ENCODE measurements at regions of chr1 and their contacts with region 1.

Region 1: GRCh38 chr1:162145280-162145965 is 75.9 kb downstream of the NOS1AP start:
- DNase-seq: no peak
- H3K4me3 ChIP-seq: peak overlapping the region in 3 of 4 experiments; percentile 37 to 41 (median 38); a peak in 5 of 8 replicates
- H3K27ac ChIP-seq: peak overlapping the region; percentile 46
- H3K4me1 ChIP-seq: peaks cover 14 to 34% (median 32%) of the 10 kb centered on the region in 4 experiments
- H3K27me3 ChIP-seq: no peaks in the 10 kb centered on the region; a peak in 1 of 7 replicates
- CTCF ChIP-seq: no peak
- EP300 ChIP-seq: peak in 1 of 2 experiments; percentile 29; a peak in 1 of 3 replicates
- POLR2A ChIP-seq: no peak
- RAD21 ChIP-seq: no peak

Region 2: GRCh38 chr1:162040681-162041080 is 104.7 kb before region 1 on chr1:
- CTCF ChIA-PET with region 1: no interaction called
- POLR2A ChIA-PET with region 1: no interaction called
- DNase-seq: no peak
- H3K4me3 ChIP-seq: no peak overlapping the region
- H3K27ac ChIP-seq: no peak overlapping the region
- H3K4me1 ChIP-seq: no peaks in the 10 kb centered on the region; a peak in 1 of 7 replicates
- H3K27me3 ChIP-seq: no peaks in the 10 kb centered on the region
- CTCF ChIP-seq: peak in 2 of 3 experiments; percentile 55 to 74; a peak in 3 of 4 replicates
- EP300 ChIP-seq: no peak
- POLR2A ChIP-seq: no peak
- RAD21 ChIP-seq: peak; percentile 44 to 45; a peak in 3 of 4 replicates

Region 3: DNA sequence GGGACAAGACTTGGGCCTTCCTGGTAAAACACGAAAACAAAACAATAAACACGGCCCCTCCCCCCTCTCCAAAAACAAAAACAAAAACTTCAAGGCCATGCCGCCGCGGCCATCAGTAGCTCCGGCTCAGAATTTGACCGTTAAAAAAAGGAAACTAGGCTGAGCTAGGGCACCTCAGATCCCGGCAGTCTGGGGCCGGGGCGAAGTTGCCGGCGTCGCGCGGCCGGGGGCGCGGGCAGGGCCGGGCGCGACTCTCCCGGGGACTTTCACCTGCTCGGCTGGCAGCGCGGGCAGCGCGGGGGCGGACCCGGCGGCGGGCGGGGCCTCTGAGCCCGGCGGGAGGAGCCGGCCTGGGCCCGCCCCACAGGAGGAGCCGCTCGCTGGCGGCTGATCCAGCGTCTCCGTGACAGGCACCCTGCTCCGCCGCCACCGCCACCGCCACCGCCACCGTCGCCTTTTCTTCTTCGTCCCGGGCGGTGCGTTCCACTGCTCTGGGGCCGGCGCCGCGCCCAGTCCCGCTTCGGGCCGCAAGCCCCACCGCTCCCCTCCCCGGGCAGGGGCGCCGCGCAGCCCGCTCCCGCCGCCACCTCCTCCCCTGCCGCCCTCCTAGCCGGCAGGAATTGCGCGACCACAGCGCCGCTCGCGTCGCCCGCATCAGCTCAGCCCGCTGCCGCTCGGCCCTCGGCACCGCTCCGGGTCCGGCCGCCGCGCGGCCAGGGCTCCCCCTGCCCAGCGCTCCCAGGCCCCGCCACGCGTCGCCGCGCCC is 75.9 kb before region 1 on chr1 and contains the start of gene NOS1AP:
- CTCF ChIA-PET with region 1: interaction called, 4 read pairs
- POLR2A ChIA-PET with region 1: interaction called, 24 read pairs
- DNase-seq: peak in 1 of 2 experiments; percentile 89
- H3K4me3 ChIP-seq: peak within 1 kb of the TSS; percentile 72 to 79 (median 76)
- H3K27ac ChIP-seq: no peak within 1 kb of the TSS
- H3K4me1 ChIP-seq: peaks cover 6 to 32% (median 16%) of the 10 kb centered on the region in 4 experiments; a peak in 6 of 7 replicates
- H3K27me3 ChIP-seq: no peaks in the 10 kb centered on the region
- CTCF ChIP-seq: no peak
- EP300 ChIP-seq: no peak
- POLR2A ChIP-seq: no peak; a peak in 1 of 3 replicates
- RAD21 ChIP-seq: no peak; a peak in 1 of 4 replicates
- total RNA-seq, gene NOS1AP: 11.4 and 12.1 TPM in 2 replicates

Region 4: GRCh38 chr1:162091681-162092524 is 53.5 kb before region 1 on chr1:
- CTCF ChIA-PET with region 1: interaction called, 3 read pairs
- POLR2A ChIA-PET with region 1: interaction called, 10 read pairs
- DNase-seq: peak; percentile 56 to 70
- H3K4me3 ChIP-seq: peak overlapping the region in 3 of 4 experiments; percentile 17 to 41 (median 26); a peak in 4 of 8 replicates
- H3K27ac ChIP-seq: no peak overlapping the region
- H3K4me1 ChIP-seq: peaks cover 4 to 17% (median 11%) of the 10 kb centered on the region in 4 experiments; a peak in 6 of 7 replicates
- H3K27me3 ChIP-seq: peaks cover 0 to 5% (median 2%) of the 10 kb centered on the region in 4 experiments; a peak in 4 of 7 replicates
- CTCF ChIP-seq: no peak; a peak in 1 of 4 replicates
- EP300 ChIP-seq: peak in 1 of 2 experiments; percentile 81; a peak in 2 of 3 replicates
- POLR2A ChIP-seq: no peak
- RAD21 ChIP-seq: peak; percentile 19; a peak in 2 of 4 replicates

Region 5: DNA sequence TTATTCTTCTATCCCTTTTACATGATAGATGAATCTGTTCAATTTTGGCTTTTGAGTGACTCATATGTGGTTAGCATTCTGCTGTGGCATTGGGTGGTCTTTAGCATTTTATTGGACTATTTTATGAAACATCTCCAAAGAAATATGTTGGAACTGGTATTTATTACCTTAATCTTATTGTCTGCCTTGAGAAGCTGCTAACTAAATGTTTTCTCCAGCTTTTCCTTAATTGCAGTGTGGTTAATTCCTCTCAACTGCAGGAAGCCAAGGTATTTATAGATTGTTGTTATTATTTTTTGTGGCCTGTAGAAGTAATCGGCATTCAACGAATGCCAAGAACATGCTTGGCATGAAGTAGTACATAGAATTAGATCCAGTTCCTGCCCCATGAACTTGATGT is 11.9 kb before region 1 on chr1:
- CTCF ChIA-PET with region 1: interaction called, 12 read pairs
- POLR2A ChIA-PET with region 1: interaction called, 8 read pairs
- DNase-seq: no peak
- H3K4me3 ChIP-seq: no peak overlapping the region
- H3K27ac ChIP-seq: no peak overlapping the region
- H3K4me1 ChIP-seq: peaks cover 4 to 18% (median 6%) of the 10 kb centered on the region in 4 experiments
- H3K27me3 ChIP-seq: no peaks in the 10 kb centered on the region
- CTCF ChIP-seq: no peak
- EP300 ChIP-seq: no peak
- POLR2A ChIP-seq: no peak
- RAD21 ChIP-seq: no peak

Region 6: DNA sequence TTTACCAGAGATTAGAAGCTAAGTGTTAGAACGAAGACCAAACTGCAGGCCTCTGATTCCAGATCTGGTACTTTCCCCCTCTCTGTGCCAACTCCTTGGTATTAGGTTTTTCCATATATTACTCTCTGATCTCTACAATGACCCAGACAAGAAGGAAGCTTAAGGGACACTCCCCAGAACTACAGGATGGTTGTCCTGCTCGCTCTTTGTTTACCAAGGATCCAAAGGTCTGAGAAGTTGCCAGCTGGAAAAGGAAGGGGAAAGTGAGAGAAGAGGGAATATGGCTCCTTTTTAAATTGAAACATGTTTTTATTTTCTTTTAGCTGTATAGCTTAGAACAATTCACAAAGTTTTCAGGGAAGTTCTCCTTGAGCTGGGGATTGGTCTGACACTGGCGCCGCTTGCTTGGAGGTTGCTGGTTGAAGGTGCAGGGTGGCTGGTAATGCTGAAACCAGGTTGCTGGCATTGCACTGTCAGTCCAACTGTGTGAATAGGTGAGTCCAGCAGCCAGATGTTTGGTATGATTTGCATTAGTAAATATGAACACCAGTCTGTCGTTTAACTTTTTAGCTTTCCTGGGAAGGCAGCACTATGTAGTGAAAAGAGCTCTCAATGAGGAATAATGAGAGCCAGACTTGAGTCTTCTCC is 13.3 kb after region 1 on chr1:
- CTCF ChIA-PET with region 1: interaction called, 36 read pairs
- POLR2A ChIA-PET with region 1: interaction called, 8 read pairs
- DNase-seq: no peak
- H3K4me3 ChIP-seq: no peak overlapping the region
- H3K27ac ChIP-seq: no peak overlapping the region
- H3K4me1 ChIP-seq: no peaks in the 10 kb centered on the region; a peak in 1 of 7 replicates
- H3K27me3 ChIP-seq: no peaks in the 10 kb centered on the region
- CTCF ChIP-seq: no peak
- EP300 ChIP-seq: no peak
- POLR2A ChIP-seq: no peak
- RAD21 ChIP-seq: no peak

Region 7: DNA sequence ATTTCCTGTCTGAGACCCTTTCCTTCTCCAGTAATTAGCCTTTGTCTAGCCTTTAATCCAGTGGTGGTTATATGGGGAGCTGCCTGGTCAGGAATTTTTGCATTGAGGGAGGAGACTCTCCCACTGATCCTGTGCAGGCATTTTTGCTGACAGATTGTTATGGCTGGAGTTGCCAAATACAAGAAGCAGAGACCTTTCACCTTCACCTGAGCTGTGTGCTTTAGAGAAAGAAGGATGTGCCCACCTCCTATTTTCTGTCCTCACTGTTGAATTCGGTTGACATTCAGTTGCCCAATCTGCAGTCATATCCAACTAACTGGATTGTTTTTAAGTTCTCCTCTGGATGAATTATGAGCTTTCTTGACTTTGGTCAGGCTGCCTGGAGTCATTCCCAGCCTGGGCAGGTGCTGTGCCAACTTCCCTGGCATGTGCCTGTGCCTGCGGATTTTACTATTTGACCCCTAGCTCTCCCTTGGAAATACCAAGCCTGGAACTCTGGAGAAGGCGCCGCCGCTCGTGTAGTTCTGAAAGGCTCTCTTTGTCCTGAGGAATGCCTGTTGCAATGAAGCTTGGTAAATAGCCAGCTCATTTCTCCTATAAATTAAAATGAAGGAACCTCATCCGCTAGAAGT is 68.0 kb after region 1 on chr1:
- CTCF ChIA-PET with region 1: no interaction called
- POLR2A ChIA-PET with region 1: interaction called, 11 read pairs
- DNase-seq: no peak
- H3K4me3 ChIP-seq: no peak overlapping the region
- H3K27ac ChIP-seq: no peak overlapping the region
- H3K4me1 ChIP-seq: peaks cover 2 to 17% (median 16%) of the 10 kb centered on the region in 4 experiments; a peak in 6 of 7 replicates
- H3K27me3 ChIP-seq: no peaks in the 10 kb centered on the region
- CTCF ChIP-seq: no peak
- EP300 ChIP-seq: no peak
- POLR2A ChIP-seq: no peak
- RAD21 ChIP-seq: no peak

Measured in H1 (cell line).